Heart right ventricle (tissue), 16 donors: ENCODE measurements at regions of chr12 and their contacts with region 1.

Region 1: DNA sequence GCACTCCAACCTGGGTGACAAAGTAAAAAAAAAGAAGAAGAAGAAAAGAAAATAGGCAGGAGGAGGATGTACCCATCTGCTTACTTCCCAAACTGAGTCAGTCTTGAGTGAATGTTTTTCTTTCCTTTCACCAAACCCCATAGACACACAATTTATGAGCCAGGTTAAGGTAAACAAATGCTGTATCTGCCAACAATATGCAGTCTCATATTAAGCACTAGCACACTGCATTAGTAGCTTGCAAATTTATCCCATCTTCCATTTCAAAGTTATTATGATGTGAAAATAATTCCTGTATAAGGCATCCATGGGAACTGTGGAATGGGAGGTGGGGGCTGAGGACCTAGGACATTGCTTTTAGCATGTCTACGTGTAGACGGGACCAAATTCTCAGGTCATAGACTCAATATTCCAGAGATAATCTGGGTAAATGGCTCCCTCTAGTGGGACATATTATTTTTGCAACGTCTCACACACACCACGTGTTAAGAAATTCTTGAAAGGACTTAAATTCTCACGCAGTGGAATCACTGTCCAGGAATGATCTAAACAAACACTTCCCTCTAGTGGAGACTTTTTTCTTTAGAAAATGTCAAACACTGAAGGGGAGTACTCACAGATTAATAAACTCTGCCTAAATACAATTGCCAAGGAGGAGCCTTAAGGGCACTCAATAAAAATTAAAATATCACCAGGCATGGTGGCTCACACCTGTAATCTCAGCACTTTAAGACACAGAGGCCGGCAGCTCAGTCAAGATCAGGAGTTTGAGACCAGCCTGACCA is 17.1 kb upstream of the OR10P1 start:
- DNase-seq: peak in 1 of 2 donors; percentile 80
- ATAC-seq: peak; percentile 72 to 93 (median 92)
- H3K4me3 ChIP-seq: no peak overlapping the region
- H3K27ac ChIP-seq: no peak overlapping the region
- H3K4me1 ChIP-seq: peaks cover 0 to 10% (median 0%) of the 10 kb centered on the region in 9 donors
- H3K27me3 ChIP-seq: peaks cover 0 to 17% (median 0%) of the 10 kb centered on the region in 7 donors
- CTCF ChIP-seq: peak; percentile 67 to 85 (median 81)

Region 2: DNA sequence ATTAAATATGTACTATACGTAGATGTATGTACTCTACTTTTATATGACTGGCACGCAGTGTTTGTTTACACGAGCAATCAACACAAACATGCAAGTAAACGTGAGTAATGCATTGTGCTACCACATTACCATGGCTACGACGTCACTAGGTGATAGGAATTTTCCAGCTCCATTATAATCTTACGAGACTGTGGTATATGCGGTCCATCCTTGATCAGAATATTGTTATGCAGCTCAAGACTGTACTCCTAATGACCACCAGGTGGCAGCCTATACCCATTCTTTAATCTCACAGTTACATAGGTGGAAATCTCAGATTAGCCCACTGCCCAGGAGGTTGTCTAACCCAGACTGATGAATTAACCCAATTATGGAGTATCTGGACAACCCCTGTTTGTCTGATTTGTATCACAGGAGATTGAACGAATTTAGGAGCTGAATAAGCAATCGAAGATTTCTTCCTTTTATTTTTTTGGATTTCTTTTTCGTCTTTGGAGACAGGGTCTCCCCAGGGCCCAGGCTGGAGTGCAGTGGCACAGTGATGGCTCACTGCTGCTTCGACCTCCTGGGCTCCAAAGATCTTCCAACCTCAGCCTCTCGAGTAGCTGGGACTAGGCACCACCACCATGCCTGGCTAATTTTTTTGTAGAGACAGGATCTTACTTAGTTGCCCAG is 626.2 kb before region 1 on chr12:
- intact Hi-C with region 1: loop called in 1 of 10 experiments (anchors 5 kb)
- DNase-seq: peak in 1 of 2 donors; percentile 44
- ATAC-seq: peak in 6 of 8 donors; percentile 54 to 78 (median 60)
- H3K4me3 ChIP-seq: no peak overlapping the region
- H3K27ac ChIP-seq: no peak overlapping the region
- H3K4me1 ChIP-seq: peaks cover 0 to 23% (median 6%) of the 10 kb centered on the region in 9 donors
- H3K27me3 ChIP-seq: peaks cover 0 to 21% (median 6%) of the 10 kb centered on the region in 7 donors
- CTCF ChIP-seq: peak; percentile 81 to 92 (median 87)

Region 3: DNA sequence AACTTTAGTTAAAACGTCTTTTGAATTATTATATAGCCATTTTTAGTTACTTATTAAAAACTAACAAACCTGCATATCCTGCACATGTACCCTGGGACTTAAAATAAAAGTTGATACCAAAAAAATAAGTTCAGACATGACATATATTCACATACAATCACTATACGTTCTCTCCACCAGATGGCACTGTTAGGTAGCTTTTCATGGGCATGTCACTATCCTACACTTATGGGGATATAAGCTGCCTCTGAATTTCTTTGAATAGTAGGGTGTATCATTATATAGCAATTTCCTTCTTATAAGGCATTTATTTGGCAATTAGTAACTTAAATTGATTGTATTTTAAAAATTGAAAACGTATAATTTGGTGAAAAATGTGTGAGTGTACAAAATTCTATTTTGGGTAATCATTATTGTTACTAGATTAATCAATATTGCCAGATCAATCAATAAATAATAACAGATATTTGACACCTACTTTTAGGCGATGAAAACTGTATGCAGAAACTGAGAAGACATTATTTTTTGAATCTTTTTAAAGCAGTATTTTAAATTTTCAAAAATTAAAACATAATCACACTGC is 430.5 kb before region 1 on chr12:
- intact Hi-C with region 1: loop called in 9 of 10 experiments (anchors 1 to 5 kb)
- DNase-seq: peak in 1 of 2 donors; percentile 49
- ATAC-seq: peak in 4 of 8 donors; percentile 48 to 59 (median 54)
- H3K4me3 ChIP-seq: no peak overlapping the region
- H3K27ac ChIP-seq: no peak overlapping the region
- H3K4me1 ChIP-seq: no peaks in the 10 kb centered on the region
- H3K27me3 ChIP-seq: peaks cover 0 to 17% (median 0%) of the 10 kb centered on the region in 7 donors
- CTCF ChIP-seq: peak; percentile 32 to 81 (median 75)

Region 4: GRCh38 chr12:55194382-55194781 is 425.2 kb before region 1 on chr12:
- intact Hi-C with region 1: loop called in 9 of 10 experiments (anchors 1 to 5 kb)
- DNase-seq: no peak
- ATAC-seq: no peak
- H3K4me3 ChIP-seq: no peak overlapping the region
- H3K27ac ChIP-seq: no peak overlapping the region
- H3K4me1 ChIP-seq: no peaks in the 10 kb centered on the region
- H3K27me3 ChIP-seq: peaks cover 0 to 20% (median 0%) of the 10 kb centered on the region in 7 donors
- CTCF ChIP-seq: no peak

Region 5: DNA sequence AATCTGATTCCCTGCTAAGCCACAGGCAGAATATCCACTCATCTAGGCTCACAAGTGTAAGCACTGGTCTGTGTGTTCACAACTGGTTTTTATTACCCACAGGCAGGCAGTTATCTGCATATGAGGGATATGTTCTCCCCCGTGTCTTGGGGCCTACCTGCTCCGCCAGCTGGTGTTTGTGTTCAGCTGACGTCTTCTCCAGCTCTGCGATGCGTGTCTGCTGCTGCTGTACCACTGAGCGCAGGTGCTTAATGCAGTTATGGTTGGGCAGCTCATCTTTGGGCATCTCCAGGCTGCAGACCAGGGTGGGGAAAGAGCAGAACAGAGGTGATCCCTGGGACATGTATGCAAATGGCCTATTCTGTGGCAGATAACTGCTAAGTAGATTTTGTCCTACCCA is 588.5 kb after region 1 on chr12:
- intact Hi-C with region 1: no loop called
- DNase-seq: no peak
- ATAC-seq: no peak
- H3K4me3 ChIP-seq: no peak overlapping the region
- H3K27ac ChIP-seq: no peak overlapping the region
- H3K4me1 ChIP-seq: peaks cover 0 to 22% (median 3%) of the 10 kb centered on the region in 9 donors
- H3K27me3 ChIP-seq: no peaks in the 10 kb centered on the region
- CTCF ChIP-seq: no peak